ENCODE measurements at regions of chr17 and their contacts with region 1.

Region 1: GRCh38 chr17:8138672-8139371 is 13.4 kb downstream of the PER1 start:
- DNase-seq: peak; percentile 96
- H3K4me3 Mint-ChIP-seq: no peak overlapping the region
- H3K27ac Mint-ChIP-seq: no peak overlapping the region
- H3K4me1 Mint-ChIP-seq: peaks cover 2% of the 10 kb centered on the region
- H3K27me3 Mint-ChIP-seq: peaks cover 5% of the 10 kb centered on the region

Region 2: DNA sequence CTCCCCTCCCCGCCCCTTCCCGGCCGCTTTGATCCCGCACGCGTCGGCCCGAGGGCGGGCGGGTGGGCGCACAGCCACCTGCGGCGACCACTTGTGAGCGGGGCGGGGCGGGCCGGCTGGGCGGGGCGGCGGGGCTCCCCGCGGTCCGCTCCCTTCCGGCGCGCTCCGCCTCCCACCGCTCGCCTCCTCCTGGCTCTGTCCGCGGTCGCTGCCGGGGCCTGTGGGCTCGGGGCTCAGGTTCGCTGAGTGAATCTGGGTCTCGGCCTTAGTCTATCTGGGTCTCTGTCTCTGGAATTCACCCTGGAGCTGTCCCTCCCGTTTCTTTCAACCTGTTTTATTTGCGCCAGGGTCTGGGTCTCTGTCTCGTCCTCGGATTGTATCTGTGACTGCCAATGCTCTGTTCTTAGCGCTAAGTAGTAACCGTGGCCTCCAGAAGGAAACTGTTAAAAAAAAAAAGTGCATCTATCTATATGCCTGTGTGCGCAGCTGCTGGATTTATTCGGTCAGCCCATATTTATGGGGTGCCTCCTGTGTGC is 12.2 kb before region 1 on chr17:
- CTCF ChIA-PET with region 1: interaction called, 27 read pairs
- POLR2A ChIA-PET with region 1: no interaction called
- DNase-seq: peak; percentile 39
- H3K4me3 Mint-ChIP-seq: peak overlapping the region; percentile 86
- H3K27ac Mint-ChIP-seq: peak overlapping the region; percentile 81
- H3K4me1 Mint-ChIP-seq: peaks cover 49% of the 10 kb centered on the region
- H3K27me3 Mint-ChIP-seq: peaks cover 50% of the 10 kb centered on the region

Region 3: DNA sequence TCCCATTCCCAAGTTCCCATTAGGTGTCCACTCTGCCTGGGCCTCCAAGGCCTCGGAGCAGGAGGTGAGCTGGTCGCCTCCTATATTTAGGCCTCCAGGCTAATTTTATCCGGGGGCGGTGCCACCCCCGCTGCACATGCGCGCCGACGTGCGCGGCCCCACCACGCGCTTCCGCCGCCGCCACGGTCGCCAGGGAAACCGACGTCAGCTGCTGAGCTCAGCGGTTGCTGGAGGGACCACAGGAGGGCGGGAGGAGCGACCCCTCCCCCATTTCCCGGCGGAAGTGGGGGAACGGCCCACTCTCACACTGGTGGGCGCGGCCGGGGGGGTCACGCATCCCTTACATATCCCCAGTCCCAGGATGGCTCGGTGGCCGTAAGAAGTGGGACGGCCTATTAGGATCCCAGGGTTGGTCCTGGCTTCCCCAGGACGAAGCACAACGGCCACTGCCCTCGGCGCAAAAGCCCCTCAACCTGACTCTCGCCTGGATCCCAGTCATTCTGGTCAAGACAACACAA is 12.4 kb after region 1 on chr17:
- CTCF ChIA-PET with region 1: interaction called, 68 read pairs
- POLR2A ChIA-PET with region 1: interaction called, 5 read pairs
- DNase-seq: peak; percentile 92
- H3K4me3 Mint-ChIP-seq: peak overlapping the region; percentile 84
- H3K27ac Mint-ChIP-seq: no peak overlapping the region
- H3K4me1 Mint-ChIP-seq: peaks cover 27% of the 10 kb centered on the region
- H3K27me3 Mint-ChIP-seq: no peaks in the 10 kb centered on the region

Region 4: DNA sequence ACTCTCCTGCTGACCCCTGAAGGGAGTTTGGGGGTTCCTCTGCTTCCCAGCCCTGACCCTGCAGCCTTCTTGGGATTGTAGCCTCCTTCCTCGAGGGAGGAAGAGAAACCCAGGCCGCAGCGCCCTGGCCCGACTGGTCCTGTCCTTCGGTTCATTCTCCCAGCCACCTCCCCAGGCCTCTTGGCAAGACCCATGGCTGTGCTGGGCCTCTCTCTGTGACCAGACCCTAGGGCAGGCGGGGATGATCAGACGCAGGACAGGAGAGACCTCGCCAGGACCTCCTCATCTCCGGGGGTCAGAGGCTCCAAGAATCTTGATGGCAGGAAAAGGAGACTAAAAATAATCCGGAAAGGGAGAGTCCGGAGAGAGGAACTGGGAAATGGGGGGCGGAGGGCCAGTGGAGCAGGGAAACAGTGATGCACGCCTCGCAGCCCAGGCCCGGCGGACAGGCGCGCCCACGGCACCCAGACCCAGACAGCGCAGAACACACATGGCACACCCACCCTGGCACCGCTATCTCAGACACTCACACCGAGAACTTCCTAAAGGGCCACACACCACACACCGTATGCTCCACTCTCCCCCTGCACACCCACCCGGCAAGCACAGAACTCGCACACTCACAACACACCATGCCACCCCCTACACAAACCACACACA is 172.4 kb after region 1 on chr17:
- CTCF ChIA-PET with region 1: no interaction called
- POLR2A ChIA-PET with region 1: no interaction called
- DNase-seq: no peak
- H3K4me3 Mint-ChIP-seq: no peak overlapping the region
- H3K27ac Mint-ChIP-seq: no peak overlapping the region
- H3K4me1 Mint-ChIP-seq: peaks cover 3% of the 10 kb centered on the region
- H3K27me3 Mint-ChIP-seq: peaks cover 4% of the 10 kb centered on the region

Region 5: DNA sequence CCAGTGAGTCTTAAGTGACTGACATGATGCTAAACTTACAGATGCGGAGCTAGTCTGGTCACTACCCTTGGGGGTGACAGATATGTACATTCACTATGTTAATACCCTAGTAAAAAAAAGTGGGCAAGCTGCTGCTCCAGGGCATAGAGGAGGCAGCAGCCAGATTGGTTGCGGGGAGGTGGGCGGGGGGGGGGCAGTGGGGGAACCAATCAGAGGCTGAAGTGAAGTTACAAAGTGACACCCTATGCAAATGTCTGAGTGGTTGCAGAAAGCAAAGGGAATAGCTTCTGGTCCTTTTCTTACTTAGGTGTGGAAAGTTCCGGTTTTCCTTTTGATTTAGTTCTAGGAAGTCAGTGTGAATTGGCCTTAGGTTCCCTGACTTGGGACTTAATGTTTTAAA is 309.0 kb after region 1 on chr17:
- CTCF ChIA-PET with region 1: no interaction called
- POLR2A ChIA-PET with region 1: no interaction called
- DNase-seq: no peak
- H3K4me3 Mint-ChIP-seq: no peak overlapping the region
- H3K27ac Mint-ChIP-seq: no peak overlapping the region
- H3K4me1 Mint-ChIP-seq: peaks cover 6% of the 10 kb centered on the region
- H3K27me3 Mint-ChIP-seq: no peaks in the 10 kb centered on the region

Measured in activated CD4-positive, alpha-beta T cell treated with anti-CD3 and anti-CD28 coated beads, Interleukin-2, amount 10 ng/mL, durations not matched to agents 7 days and 5 days (primary cell).